ENCODE measurements at regions of chr1 and their contacts with region 1.

Region 1: GRCh38 chr1:46303038-46303871 is at the starts of genes LRRC41 and UQCRH:
- DNase-seq: peak; percentile 99
- H3K4me3 ChIP-seq: peak within 1 kb of the TSS; percentile 75 to 99 (median 83)
- H3K27ac ChIP-seq: peak within 1 kb of the TSS; percentile 97 to 100 (median 98)
- H3K4me1 ChIP-seq: peaks cover 69 to 81% (median 78%) of the 10 kb centered on the region in 4 donors
- H3K27me3 ChIP-seq: no peaks in the 10 kb centered on the region
- CTCF ChIP-seq: no peak
- EP300 ChIP-seq: no peak
- POLR2A ChIP-seq: peak; percentile 63
- total RNA-seq, gene LRRC41: 59.0 to 81.1 (median 75.8) TPM
- total RNA-seq, gene UQCRH: 148 to 412 (median 283) TPM

Region 2: GRCh38 chr1:46340404-46341221 is 37.4 kb after region 1 on chr1 and contains the start of gene NSUN4:
- intact Hi-C with region 1: loop called (anchors 2 kb)
- DNase-seq: peak; percentile 98
- H3K4me3 ChIP-seq: peak within 1 kb of the TSS; percentile 66 to 77 (median 74)
- H3K27ac ChIP-seq: peak within 1 kb of the TSS; percentile 97 to 98 (median 98)
- H3K4me1 ChIP-seq: peaks cover 10 to 24% (median 20%) of the 10 kb centered on the region in 4 donors
- H3K27me3 ChIP-seq: peaks cover 0 to 7% (median 0%) of the 10 kb centered on the region in 4 donors
- CTCF ChIP-seq: peak; percentile 57 to 77 (median 63)
- EP300 ChIP-seq: peak; percentile 98
- POLR2A ChIP-seq: peak; percentile 36
- total RNA-seq, gene NSUN4: 14.5 to 20.7 (median 16.2) TPM

Measured in esophagus muscularis mucosa (tissue), 4 donors.